GM13976 (cell line): ENCODE measurements at regions of chr4 and their contacts with region 1.

Region 1: GRCh38 chr4:70651864-70652506 is 14.3 kb downstream of the JCHAIN start:
- DNase-seq: peak; percentile 50
- CTCF ChIP-seq: peak; percentile 34

Region 2: GRCh38 chr4:70392057-70392776 is 259.8 kb before region 1 on chr4:
- in situ Hi-C with region 1: no loop called
- DNase-seq: no peak
- CTCF ChIP-seq: no peak

Region 3: GRCh38 chr4:70759627-70760026 is 107.6 kb after region 1 on chr4:
- in situ Hi-C with region 1: no loop called
- DNase-seq: no peak
- CTCF ChIP-seq: no peak

Region 4: GRCh38 chr4:71009890-71010588 is 358.1 kb after region 1 on chr4:
- in situ Hi-C with region 1: loop called (anchors 25 kb)
- DNase-seq: peak; percentile 57
- CTCF ChIP-seq: peak; percentile 37